B cell (primary cell): ENCODE measurements at regions of chr16 and their contacts with region 1.

Region 1: DNA sequence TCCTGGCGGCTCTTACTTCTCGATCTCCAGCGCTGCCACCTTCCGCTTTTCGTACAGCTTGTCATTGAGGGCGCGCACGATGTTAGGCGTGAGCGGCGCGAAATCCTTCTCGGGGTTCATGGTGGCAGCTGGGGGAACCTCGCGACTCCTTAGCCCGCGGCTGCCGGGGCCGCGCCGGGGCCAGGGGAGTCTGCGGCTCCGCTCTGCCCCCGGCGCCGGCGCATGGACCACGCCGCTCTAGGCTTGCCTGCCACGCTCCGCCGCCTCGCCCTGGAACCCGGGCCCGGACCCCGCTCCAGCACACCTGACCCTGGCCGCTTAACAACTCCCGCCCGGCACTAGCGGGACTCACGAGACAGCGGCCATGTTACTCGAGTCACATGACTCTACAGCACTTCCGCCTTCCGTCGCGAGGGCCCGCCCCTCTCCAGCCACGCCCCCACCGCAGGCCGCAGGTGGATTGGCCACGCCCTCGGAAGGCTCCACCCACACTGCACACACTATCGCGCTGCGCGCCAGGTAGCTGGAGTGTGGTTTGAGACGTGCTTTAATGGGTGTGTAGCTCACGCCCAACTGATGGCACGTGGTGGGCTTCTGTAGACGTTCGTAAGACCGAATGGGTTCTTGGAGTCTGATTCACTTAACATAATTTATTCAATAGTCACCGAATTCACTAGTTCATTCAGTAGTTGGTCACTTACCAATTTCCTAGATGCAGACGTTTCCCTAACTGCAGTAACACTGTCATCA is at the start of gene VAC14:
- DNase-seq: peak; percentile 97
- ATAC-seq: peak; percentile 98
- H3K4me3 ChIP-seq: peak within 1 kb of the TSS; percentile 38 to 86 (median 66)
- H3K4me3 Mint-ChIP-seq: peak within 1 kb of the TSS; percentile 98
- H3K27ac ChIP-seq: peak within 1 kb of the TSS; percentile 69 to 90
- H3K27ac Mint-ChIP-seq: peak within 1 kb of the TSS; percentile 96
- H3K4me1 ChIP-seq: peaks cover 16 to 21% of the 10 kb centered on the region in 2 donors
- H3K4me1 Mint-ChIP-seq: peaks cover 36% of the 10 kb centered on the region
- H3K27me3 ChIP-seq: peaks cover 0 to 6% (median 0%) of the 10 kb centered on the region in 4 experiments
- H3K27me3 Mint-ChIP-seq: no peaks in the 10 kb centered on the region
- CTCF ChIP-seq: no peak
- total RNA-seq, gene VAC14: 59.7 and 64.7 TPM in 2 replicates

Region 2: GRCh38 chr16:70737377-70738082 is 63.4 kb before region 1 on chr16:
- CTCF ChIA-PET with region 1: no interaction called
- POLR2A ChIA-PET with region 1: no interaction called
- intact Hi-C with region 1: loop called (anchors 2 kb)
- DNase-seq: peak; percentile 63
- ATAC-seq: peak; percentile 83
- H3K4me3 ChIP-seq: no peak overlapping the region
- H3K4me3 Mint-ChIP-seq: peak overlapping the region; percentile 52
- H3K27ac ChIP-seq: peak overlapping the region in 1 of 2 donors; percentile 6
- H3K27ac Mint-ChIP-seq: peak overlapping the region; percentile 85
- H3K4me1 ChIP-seq: peaks cover 8 to 18% of the 10 kb centered on the region in 2 donors
- H3K4me1 Mint-ChIP-seq: peaks cover 18% of the 10 kb centered on the region
- H3K27me3 ChIP-seq: no peaks in the 10 kb centered on the region
- H3K27me3 Mint-ChIP-seq: no peaks in the 10 kb centered on the region
- CTCF ChIP-seq: no peak

Region 3: DNA sequence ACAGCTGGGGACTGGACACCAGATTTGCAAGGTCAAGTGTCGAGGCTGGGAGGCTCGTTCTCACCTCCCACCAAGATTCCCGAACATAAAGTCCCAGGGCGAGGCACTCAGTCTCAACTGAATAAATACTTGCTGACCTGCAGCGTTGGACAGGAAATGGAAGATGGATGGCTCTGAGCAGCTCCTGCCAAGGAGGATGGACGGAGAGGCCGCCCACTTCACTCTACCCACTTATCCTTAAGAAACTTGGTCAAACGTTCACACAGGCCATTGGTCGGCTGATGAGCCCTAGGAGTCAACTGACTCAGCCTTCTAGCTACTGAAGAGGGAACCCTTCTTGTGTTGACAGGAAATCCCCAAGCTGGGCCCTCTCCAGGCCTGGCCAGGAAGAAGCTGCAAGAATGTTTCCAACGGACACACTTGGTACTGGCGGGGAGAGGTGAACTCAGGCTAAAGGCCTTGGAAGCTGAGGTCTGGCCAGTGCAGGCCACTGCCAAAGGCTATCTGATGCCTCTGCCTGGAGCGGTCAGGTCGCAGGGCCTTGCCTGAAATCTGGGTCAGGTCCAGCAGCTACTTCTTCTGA is 50.0 kb before region 1 on chr16:
- CTCF ChIA-PET with region 1: no interaction called
- POLR2A ChIA-PET with region 1: no interaction called
- intact Hi-C with region 1: no loop called
- DNase-seq: no peak
- ATAC-seq: no peak
- H3K4me3 ChIP-seq: no peak overlapping the region
- H3K4me3 Mint-ChIP-seq: no peak overlapping the region
- H3K27ac ChIP-seq: no peak overlapping the region
- H3K27ac Mint-ChIP-seq: no peak overlapping the region
- H3K4me1 ChIP-seq: no peaks in the 10 kb centered on the region
- H3K4me1 Mint-ChIP-seq: peaks cover 10% of the 10 kb centered on the region
- H3K27me3 ChIP-seq: no peaks in the 10 kb centered on the region
- H3K27me3 Mint-ChIP-seq: no peaks in the 10 kb centered on the region
- CTCF ChIP-seq: no peak

Region 4: DNA sequence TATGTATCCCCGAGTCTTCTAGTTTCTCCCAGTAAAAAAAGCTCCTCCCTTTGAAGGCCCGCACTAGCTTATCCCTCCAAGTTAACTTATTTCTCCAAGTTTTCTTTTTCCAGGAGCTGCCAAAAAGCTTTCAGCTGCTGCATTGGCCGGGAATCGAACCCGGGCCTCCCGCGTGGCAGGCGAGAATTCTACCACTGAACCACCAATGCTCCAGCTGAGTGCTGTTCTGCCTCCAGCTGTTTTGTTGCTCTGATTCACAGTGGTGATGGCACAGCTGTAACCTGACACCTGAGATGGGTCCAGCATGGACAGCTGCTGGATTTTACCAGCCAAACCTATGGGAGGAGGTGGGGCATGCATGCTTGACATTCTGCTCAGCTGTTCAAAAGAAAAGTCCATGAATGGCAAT is 22.1 kb before region 1 on chr16:
- CTCF ChIA-PET with region 1: no interaction called
- POLR2A ChIA-PET with region 1: no interaction called
- intact Hi-C with region 1: no loop called
- DNase-seq: no peak
- ATAC-seq: no peak
- H3K4me3 ChIP-seq: no peak overlapping the region
- H3K4me3 Mint-ChIP-seq: no peak overlapping the region
- H3K27ac ChIP-seq: no peak overlapping the region
- H3K27ac Mint-ChIP-seq: no peak overlapping the region
- H3K4me1 ChIP-seq: no peaks in the 10 kb centered on the region
- H3K4me1 Mint-ChIP-seq: no peaks in the 10 kb centered on the region
- H3K27me3 ChIP-seq: no peaks in the 10 kb centered on the region
- H3K27me3 Mint-ChIP-seq: no peaks in the 10 kb centered on the region
- CTCF ChIP-seq: no peak

Region 5: DNA sequence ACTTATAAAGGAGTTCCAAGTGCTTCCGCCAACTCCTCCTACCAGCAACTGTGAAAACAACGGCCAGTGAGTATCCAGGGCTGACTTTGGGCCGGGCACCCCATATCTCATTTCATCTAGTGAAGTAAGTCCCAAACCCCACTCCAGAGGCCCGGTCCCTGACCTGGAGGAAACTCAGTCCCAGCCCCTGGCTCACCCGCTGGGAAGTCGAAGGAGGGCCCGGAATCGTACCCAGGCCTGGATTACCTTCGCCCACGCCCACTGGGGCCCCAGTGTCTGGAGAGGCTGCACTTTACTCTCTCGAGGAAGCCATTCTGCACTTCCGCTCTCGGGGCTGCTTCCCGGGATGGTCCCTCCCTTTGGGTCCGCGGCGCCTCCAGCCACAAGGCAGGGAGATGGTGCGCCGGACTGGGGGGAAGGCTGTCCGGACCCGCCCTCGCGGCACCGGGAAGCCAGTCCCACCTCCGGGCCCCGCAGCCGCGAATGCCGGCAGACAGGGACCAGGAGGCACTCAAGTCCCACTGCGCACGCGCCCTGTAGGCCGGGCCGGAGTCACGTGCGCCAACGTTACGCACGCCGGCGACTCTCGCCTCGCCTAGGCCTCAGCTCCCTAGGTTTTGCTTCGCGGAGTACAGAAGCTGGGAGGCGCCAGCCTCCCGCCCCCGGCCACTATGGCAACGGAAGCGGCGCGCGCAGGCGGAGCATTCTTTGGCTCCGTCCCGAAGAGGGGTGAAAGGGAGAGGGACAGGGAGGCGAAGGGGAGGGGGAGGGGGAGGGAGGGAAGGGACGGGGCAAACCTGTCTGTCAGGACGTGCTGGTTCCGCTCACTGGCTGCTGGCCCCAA is 488.2 kb after region 1 on chr16 and contains the start of gene CMTR2:
- CTCF ChIA-PET with region 1: no interaction called
- POLR2A ChIA-PET with region 1: interaction called, 3 read pairs
- intact Hi-C with region 1: loop called (anchors 2 kb)
- DNase-seq: peak; percentile 95
- ATAC-seq: peak; percentile 85
- H3K4me3 ChIP-seq: peak within 1 kb of the TSS; percentile 61 to 97 (median 67)
- H3K4me3 Mint-ChIP-seq: peak within 1 kb of the TSS; percentile 93
- H3K27ac ChIP-seq: peak within 1 kb of the TSS; percentile 84 to 94
- H3K27ac Mint-ChIP-seq: peak within 1 kb of the TSS; percentile 97
- H3K4me1 ChIP-seq: peaks cover 14 to 16% of the 10 kb centered on the region in 2 donors
- H3K4me1 Mint-ChIP-seq: peaks cover 32% of the 10 kb centered on the region
- H3K27me3 ChIP-seq: peaks cover 0 to 10% (median 5%) of the 10 kb centered on the region in 4 experiments
- H3K27me3 Mint-ChIP-seq: peaks cover 19% of the 10 kb centered on the region
- CTCF ChIP-seq: no peak
- total RNA-seq, gene CMTR2: 41.3 and 46.1 TPM in 2 replicates